ENCODE measurements at regions of chr2 and their contacts with region 1.

Region 1: GRCh38 chr2:26846328-26847306 is 1.3 kb upstream of the DPYSL5 start:
- DNase-seq: peak; percentile 52
- H3K4me3 ChIP-seq: 0 out of 2 replicates have a peak overlapping the region, but pooled peaks have one; percentile 7
- H3K27ac ChIP-seq: no peak overlapping the region
- H3K27me3 ChIP-seq: peaks cover 74% of the 10 kb centered on the region
- CTCF ChIP-seq: peak; percentile 85

Region 2: GRCh38 chr2:26229595-26229994 is 617.0 kb before region 1 on chr2:
- CTCF ChIA-PET with region 1: no interaction called
- POLR2A ChIA-PET with region 1: no interaction called
- DNase-seq: no peak
- H3K4me3 ChIP-seq: no peak overlapping the region
- H3K27ac ChIP-seq: no peak overlapping the region
- H3K27me3 ChIP-seq: no peaks in the 10 kb centered on the region
- CTCF ChIP-seq: no peak

Region 3: GRCh38 chr2:26922405-26923188 is 76.0 kb after region 1 on chr2:
- CTCF ChIA-PET with region 1: interaction called, 14 read pairs
- POLR2A ChIA-PET with region 1: interaction called, 8 read pairs
- DNase-seq: no peak
- H3K4me3 ChIP-seq: no peak overlapping the region
- H3K27ac ChIP-seq: no peak overlapping the region
- H3K27me3 ChIP-seq: peaks cover 26% of the 10 kb centered on the region
- CTCF ChIP-seq: peak; percentile 54

Region 4: GRCh38 chr2:26942543-26943295 is 96.1 kb after region 1 on chr2:
- CTCF ChIA-PET with region 1: interaction called, 95 read pairs
- POLR2A ChIA-PET with region 1: interaction called, 3 read pairs
- DNase-seq: no peak
- H3K4me3 ChIP-seq: no peak overlapping the region
- H3K27ac ChIP-seq: no peak overlapping the region
- H3K27me3 ChIP-seq: peaks cover 40% of the 10 kb centered on the region
- CTCF ChIP-seq: peak; percentile 77

Region 5: GRCh38 chr2:26959331-26959730 is 112.7 kb after region 1 on chr2:
- CTCF ChIA-PET with region 1: interaction called, 17 read pairs
- POLR2A ChIA-PET with region 1: interaction called, 4 read pairs
- DNase-seq: no peak
- H3K4me3 ChIP-seq: no peak overlapping the region
- H3K27ac ChIP-seq: no peak overlapping the region
- H3K27me3 ChIP-seq: peaks cover 46% of the 10 kb centered on the region
- CTCF ChIP-seq: no peak

Region 6: DNA sequence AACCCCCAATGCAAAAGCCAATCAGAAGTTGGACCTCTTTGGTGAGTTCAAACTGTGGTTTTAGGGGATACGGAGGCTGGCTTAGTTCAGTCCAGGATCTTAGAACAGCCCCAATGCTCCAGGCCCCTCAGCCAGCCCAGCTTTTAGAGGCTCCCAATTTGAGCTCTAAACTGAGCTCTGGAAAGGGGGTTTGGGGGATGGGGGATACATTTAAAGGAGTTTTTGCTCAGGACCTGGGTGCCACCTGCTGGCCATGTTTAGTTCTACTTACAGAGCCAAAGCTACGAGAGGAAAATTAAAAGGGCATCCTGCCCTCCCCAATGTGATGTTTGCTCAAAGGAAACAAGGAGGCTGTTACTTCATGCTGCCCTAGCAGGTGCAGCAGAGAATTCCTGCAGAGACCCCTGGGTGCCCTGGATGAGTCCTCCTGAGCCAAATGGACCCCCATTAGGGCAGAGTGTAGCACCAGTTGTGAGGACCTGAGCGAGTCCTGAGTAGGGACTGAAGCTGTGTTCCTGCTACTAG is 170.2 kb after region 1 on chr2:
- CTCF ChIA-PET with region 1: interaction called, 147 read pairs
- POLR2A ChIA-PET with region 1: interaction called, 12 read pairs
- DNase-seq: peak; percentile 47
- H3K4me3 ChIP-seq: no peak overlapping the region
- H3K27ac ChIP-seq: peak overlapping the region; percentile 47
- H3K27me3 ChIP-seq: no peaks in the 10 kb centered on the region
- CTCF ChIP-seq: peak; percentile 77

Measured in AG04450 (cell line).